ENCODE measurements at regions of chr2 and their contacts with region 1.

Region 1: GRCh38 chr2:211157856-211158463 is 601.6 kb downstream of the CPS1 start:
- DNase-seq: peak; percentile 80
- H3K4me3 Mint-ChIP-seq: no peak overlapping the region
- H3K27ac Mint-ChIP-seq: no peak overlapping the region
- H3K4me1 Mint-ChIP-seq: no peaks in the 10 kb centered on the region
- H3K27me3 Mint-ChIP-seq: peaks cover 72% of the 10 kb centered on the region
- CTCF ChIP-seq: peak; percentile 68

Region 2: GRCh38 chr2:211085056-211085680 is 72.8 kb before region 1 on chr2:
- CTCF ChIA-PET with region 1: interaction called, 41 read pairs
- POLR2A ChIA-PET with region 1: no interaction called
- intact Hi-C with region 1: loop called (anchors 1 kb)
- DNase-seq: peak; percentile 61
- H3K4me3 Mint-ChIP-seq: no peak overlapping the region
- H3K27ac Mint-ChIP-seq: no peak overlapping the region
- H3K4me1 Mint-ChIP-seq: no peaks in the 10 kb centered on the region
- H3K27me3 Mint-ChIP-seq: peaks cover 89% of the 10 kb centered on the region
- CTCF ChIP-seq: peak; percentile 63

Region 3: GRCh38 chr2:211093743-211094303 is 64.1 kb before region 1 on chr2:
- CTCF ChIA-PET with region 1: interaction called, 41 read pairs
- POLR2A ChIA-PET with region 1: no interaction called
- intact Hi-C with region 1: no loop called
- DNase-seq: peak; percentile 27
- H3K4me3 Mint-ChIP-seq: no peak overlapping the region
- H3K27ac Mint-ChIP-seq: no peak overlapping the region
- H3K4me1 Mint-ChIP-seq: no peaks in the 10 kb centered on the region
- H3K27me3 Mint-ChIP-seq: peaks cover 93% of the 10 kb centered on the region
- CTCF ChIP-seq: peak; percentile 31